Thyroid gland (tissue), 4 donors: ENCODE measurements at regions of chr3 and their contacts with region 1.

Region 1: DNA sequence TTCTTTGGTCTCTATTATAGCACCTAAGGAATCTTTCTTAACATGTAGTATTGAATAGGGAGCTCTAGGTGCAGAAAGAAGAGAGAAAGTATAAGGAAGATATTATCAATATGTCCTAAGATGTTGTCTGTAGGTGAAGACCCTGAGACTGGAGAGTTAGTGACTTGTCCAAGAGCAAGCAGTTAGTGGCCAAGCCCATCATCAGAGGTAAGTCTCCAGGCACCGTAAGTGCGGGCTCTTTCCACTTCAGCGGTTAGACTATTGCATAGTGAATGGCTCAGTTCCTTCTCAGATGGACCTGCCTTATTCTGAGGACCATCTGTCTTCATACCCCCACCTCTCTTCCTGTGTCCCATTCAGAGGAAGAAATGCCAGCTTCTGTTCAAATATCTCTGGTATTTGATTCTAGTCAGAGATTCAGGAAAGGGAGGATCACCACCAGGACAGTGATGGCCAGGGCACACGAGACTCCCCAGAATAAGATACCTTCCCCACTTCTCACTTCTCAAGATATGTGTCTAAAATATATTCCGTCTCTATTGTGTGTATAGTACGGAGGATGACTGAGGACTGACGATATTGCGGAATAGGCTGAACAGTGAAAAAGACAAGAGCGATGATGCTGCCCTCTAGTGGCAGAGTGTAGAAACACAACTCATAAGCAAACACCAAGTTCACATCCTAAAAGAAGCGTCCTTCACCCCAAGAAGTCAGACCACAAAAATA is 19.1 kb upstream of the ADGRG7 start:
- DNase-seq: peak; percentile 48 to 56
- H3K4me3 ChIP-seq: no peak overlapping the region
- H3K27ac ChIP-seq: no peak overlapping the region
- H3K4me1 ChIP-seq: no peaks in the 10 kb centered on the region
- H3K27me3 ChIP-seq: no peaks in the 10 kb centered on the region
- CTCF ChIP-seq: peak; percentile 76 to 87 (median 84)
- POLR2A ChIP-seq: no peak

Region 2: GRCh38 chr3:100316641-100317069 is 273.6 kb before region 1 on chr3:
- intact Hi-C with region 1: loop called (anchors 10 kb)
- DNase-seq: peak; percentile 17 to 25
- H3K4me3 ChIP-seq: no peak overlapping the region
- H3K27ac ChIP-seq: no peak overlapping the region
- H3K4me1 ChIP-seq: no peaks in the 10 kb centered on the region
- H3K27me3 ChIP-seq: no peaks in the 10 kb centered on the region
- CTCF ChIP-seq: peak; percentile 22 to 77 (median 60)
- POLR2A ChIP-seq: no peak

Region 3: DNA sequence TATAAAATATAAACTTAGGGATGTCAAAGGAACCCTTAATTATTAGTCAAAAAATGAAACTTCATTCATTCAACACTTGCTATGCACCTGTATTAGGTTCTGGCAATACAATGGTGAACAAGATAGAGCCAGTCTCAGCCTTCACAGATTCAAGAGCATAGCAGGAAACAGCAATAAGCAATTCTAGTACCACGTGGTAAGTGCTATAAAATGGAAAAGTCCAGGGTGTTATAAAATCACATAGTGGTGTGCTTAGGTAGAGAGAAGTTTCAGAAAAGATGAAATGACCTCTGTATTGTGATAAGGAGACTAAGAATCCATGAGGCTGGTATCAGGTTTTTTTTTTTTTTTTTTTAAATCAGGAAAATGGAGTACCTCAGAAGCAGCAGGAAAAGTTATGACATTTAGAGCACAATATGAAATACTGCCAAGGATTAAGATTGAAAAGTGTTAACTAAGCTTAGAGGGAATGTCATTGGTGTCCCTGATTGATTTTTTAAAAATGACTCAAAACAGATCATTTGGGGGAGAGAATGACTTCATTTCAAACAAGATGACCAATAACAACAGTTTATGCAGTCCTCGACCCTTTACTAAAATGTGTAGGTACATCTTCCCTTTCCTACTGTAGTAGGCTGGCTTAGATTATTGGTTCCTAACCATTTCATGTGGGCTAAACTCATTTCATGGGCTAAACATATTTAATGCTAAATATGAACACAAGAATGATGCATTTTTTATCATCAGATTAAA is 194.4 kb before region 1 on chr3:
- intact Hi-C with region 1: no loop called
- DNase-seq: no peak
- H3K4me3 ChIP-seq: no peak overlapping the region
- H3K27ac ChIP-seq: no peak overlapping the region
- H3K4me1 ChIP-seq: peaks cover 11 to 22% of the 10 kb centered on the region in 2 donors
- H3K27me3 ChIP-seq: no peaks in the 10 kb centered on the region
- CTCF ChIP-seq: no peak
- POLR2A ChIP-seq: no peak

Region 4: DNA sequence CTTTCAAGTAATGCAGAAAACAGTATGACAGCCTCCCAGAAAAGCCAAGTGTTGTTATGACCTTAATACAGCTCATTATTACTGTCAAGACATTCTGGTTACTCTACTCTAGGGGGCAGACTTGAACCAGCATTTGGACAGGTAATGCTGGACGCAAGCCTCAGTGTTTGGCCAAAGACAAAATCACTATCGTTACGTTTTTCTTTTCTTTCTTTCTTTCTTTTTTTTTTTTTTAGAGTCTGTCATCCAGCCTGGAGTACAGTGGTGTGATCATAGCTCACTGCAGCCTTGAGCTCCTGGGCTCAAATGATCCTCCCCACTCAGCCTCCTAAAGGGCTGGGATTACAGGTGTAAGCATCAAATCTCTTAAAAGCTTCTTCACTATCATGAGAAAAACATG is 127.3 kb before region 1 on chr3:
- intact Hi-C with region 1: loop called (anchors 5 kb)
- DNase-seq: peak; percentile 17 to 24
- H3K4me3 ChIP-seq: no peak overlapping the region
- H3K27ac ChIP-seq: no peak overlapping the region
- H3K4me1 ChIP-seq: no peaks in the 10 kb centered on the region
- H3K27me3 ChIP-seq: no peaks in the 10 kb centered on the region
- CTCF ChIP-seq: peak; percentile 38 to 86 (median 64)
- POLR2A ChIP-seq: no peak